CD4-positive, alpha-beta memory T cell (primary cell): ENCODE measurements at regions of chr3 and their contacts with region 1.

Region 1: GRCh38 chr3:151918253-151919029 is 45.0 kb downstream of the SUCNR1 start:
- DNase-seq: peak in 4 of 5 donors; percentile 12 to 28 (median 18)
- H3K4me3 ChIP-seq: no peak overlapping the region
- H3K4me3 Mint-ChIP-seq: no peak overlapping the region
- H3K27ac ChIP-seq: no peak overlapping the region
- H3K27ac Mint-ChIP-seq: no peak overlapping the region
- H3K4me1 ChIP-seq: no peaks in the 10 kb centered on the region
- H3K4me1 Mint-ChIP-seq: no peaks in the 10 kb centered on the region
- H3K27me3 ChIP-seq: no peaks in the 10 kb centered on the region
- H3K27me3 Mint-ChIP-seq: peaks cover 0 to 3% of the 10 kb centered on the region in 2 donors

Region 2: GRCh38 chr3:151439652-151440129 is 478.8 kb before region 1 on chr3:
- CTCF ChIA-PET with region 1: interaction called, 10 read pairs
- POLR2A ChIA-PET with region 1: no interaction called
- intact Hi-C with region 1: loop called (anchors 1 kb)
- DNase-seq: peak in 4 of 5 donors; percentile 17 to 30 (median 22)
- H3K4me3 ChIP-seq: no peak overlapping the region
- H3K4me3 Mint-ChIP-seq: no peak overlapping the region
- H3K27ac ChIP-seq: no peak overlapping the region
- H3K27ac Mint-ChIP-seq: no peak overlapping the region
- H3K4me1 ChIP-seq: no peaks in the 10 kb centered on the region
- H3K4me1 Mint-ChIP-seq: no peaks in the 10 kb centered on the region
- H3K27me3 ChIP-seq: no peaks in the 10 kb centered on the region
- H3K27me3 Mint-ChIP-seq: peaks cover 0 to 2% of the 10 kb centered on the region in 2 donors

Region 3: GRCh38 chr3:151468284-151468917 is 450.0 kb before region 1 on chr3:
- CTCF ChIA-PET with region 1: interaction called, 25 read pairs
- POLR2A ChIA-PET with region 1: no interaction called
- intact Hi-C with region 1: no loop called
- DNase-seq: peak in 4 of 5 donors; percentile 34 to 51 (median 38)
- H3K4me3 ChIP-seq: no peak overlapping the region
- H3K4me3 Mint-ChIP-seq: no peak overlapping the region
- H3K27ac ChIP-seq: no peak overlapping the region
- H3K27ac Mint-ChIP-seq: no peak overlapping the region
- H3K4me1 ChIP-seq: no peaks in the 10 kb centered on the region
- H3K4me1 Mint-ChIP-seq: no peaks in the 10 kb centered on the region
- H3K27me3 ChIP-seq: no peaks in the 10 kb centered on the region
- H3K27me3 Mint-ChIP-seq: peaks cover 8 to 10% of the 10 kb centered on the region in 2 donors

Region 4: GRCh38 chr3:152100491-152101132 is 182.2 kb after region 1 on chr3:
- CTCF ChIA-PET with region 1: no interaction called
- POLR2A ChIA-PET with region 1: no interaction called
- intact Hi-C with region 1: no loop called
- DNase-seq: peak in 2 of 5 donors; percentile 2 to 42
- H3K4me3 ChIP-seq: no peak overlapping the region
- H3K4me3 Mint-ChIP-seq: no peak overlapping the region
- H3K27ac ChIP-seq: no peak overlapping the region
- H3K27ac Mint-ChIP-seq: no peak overlapping the region
- H3K4me1 ChIP-seq: no peaks in the 10 kb centered on the region
- H3K4me1 Mint-ChIP-seq: peaks cover 0 to 7% (median 2%) of the 10 kb centered on the region in 4 donors
- H3K27me3 ChIP-seq: no peaks in the 10 kb centered on the region
- H3K27me3 Mint-ChIP-seq: peaks cover 0 to 1% of the 10 kb centered on the region in 2 donors